BJ (cell line): ENCODE measurements at regions of chr5 and their contacts with region 1.

Region 1: GRCh38 chr5:43560128-43560527 is 3.3 kb upstream of the PAIP1 start:
- DNase-seq: no peak
- H3K4me3 ChIP-seq: no peak overlapping the region
- H3K27me3 ChIP-seq: no peaks in the 10 kb centered on the region
- CTCF ChIP-seq: no peak

Region 2: DNA sequence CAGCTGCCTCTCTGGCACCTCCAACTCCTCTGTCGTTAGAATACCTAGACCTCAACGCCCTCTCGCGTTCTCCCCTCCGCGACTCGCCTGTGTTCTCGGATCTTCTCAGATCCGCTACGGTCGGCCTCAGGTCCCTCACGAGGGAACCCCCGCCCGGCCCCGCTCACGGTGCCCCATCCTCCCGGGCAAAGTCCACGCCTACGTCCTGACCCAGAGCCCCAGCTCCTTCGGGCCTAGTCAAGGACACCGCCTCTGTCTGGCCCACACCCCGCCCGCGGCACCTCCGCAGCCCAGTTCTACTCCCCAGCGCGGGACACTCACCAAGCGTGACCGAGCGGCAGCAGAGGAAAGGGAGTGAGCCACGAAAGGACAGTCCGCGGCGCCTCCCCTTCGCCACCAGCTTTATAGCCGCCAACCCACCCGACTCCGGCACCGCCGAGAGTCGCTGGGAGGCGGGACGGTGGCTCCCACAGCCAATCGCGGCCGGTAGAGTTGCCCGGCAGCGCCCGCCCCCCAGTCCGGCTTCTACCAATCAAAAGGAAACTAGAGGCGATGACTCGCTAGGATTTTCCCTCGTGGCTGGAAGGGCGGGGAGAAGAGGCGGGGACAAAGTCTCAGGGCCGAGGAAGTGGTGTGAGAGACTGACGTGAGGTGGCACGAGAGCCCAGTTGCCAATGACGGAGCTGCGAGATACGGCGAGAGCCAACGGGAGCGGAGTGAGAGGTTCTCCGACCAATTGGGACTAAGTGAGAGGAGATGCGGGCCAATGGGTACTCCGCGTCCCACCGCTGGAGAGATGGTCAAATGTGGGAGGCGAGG is 246.9 kb before region 1 on chr5 and contains the start of gene HMGCS1:
- CTCF ChIA-PET with region 1: no interaction called
- POLR2A ChIA-PET with region 1: no interaction called
- DNase-seq: peak; percentile 98
- H3K4me3 ChIP-seq: peak within 1 kb of the TSS; percentile 79
- H3K27me3 ChIP-seq: 0 out of 2 replicates have a peak, but pooled peaks cover 2% of the 10 kb centered on the region
- CTCF ChIP-seq: peak; percentile 19; the same call in 1 of the 2 replicates
- polyA plus RNA-seq, gene HMGCS1: 8.6 and 11.3 TPM in 2 replicates

Region 3: DNA sequence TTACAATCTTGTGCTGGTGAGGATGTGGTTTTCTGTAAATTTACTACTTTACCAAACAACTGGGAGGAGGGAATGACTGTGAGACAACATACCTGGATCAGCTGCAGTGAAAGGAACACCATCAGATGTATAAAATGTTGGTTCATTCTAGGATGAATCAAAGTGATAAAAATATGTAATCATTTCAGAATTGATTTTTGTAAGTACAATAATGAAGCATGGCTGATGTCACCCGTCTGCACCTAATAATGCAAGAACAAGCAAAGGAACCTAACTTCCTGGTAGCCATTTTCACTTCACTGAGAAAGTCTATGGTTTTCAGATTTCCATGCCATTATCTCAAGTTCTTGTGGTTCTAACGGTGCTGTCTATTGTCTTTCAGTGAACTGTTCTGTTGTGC is 26.5 kb before region 1 on chr5:
- CTCF ChIA-PET with region 1: no interaction called
- POLR2A ChIA-PET with region 1: no interaction called
- DNase-seq: no peak
- H3K4me3 ChIP-seq: no peak overlapping the region
- H3K27me3 ChIP-seq: no peaks in the 10 kb centered on the region
- CTCF ChIP-seq: no peak

Region 4: GRCh38 chr5:43602461-43603343 is 42.6 kb after region 1 on chr5 and contains the start of gene NNT:
- CTCF ChIA-PET with region 1: interaction called, 3 read pairs
- POLR2A ChIA-PET with region 1: interaction called, 17 read pairs
- DNase-seq: no peak
- H3K4me3 ChIP-seq: peak within 1 kb of the TSS; percentile 76
- H3K27me3 ChIP-seq: no peaks in the 10 kb centered on the region
- CTCF ChIP-seq: no peak
- polyA plus RNA-seq, gene NNT: 44.8 and 48.7 TPM in 2 replicates